ENCODE measurements at regions of chr5 and their contacts with region 1.

Region 1: GRCh38 chr5:115246361-115246991 is 16.2 kb downstream of the PGGT1B start:
- DNase-seq: no peak
- ATAC-seq: peak; percentile 34

Region 2: GRCh38 chr5:115098041-115098702 is 148.3 kb before region 1 on chr5:
- intact Hi-C with region 1: loop called (anchors 2 kb)
- DNase-seq: no peak
- ATAC-seq: peak; percentile 29

Region 3: GRCh38 chr5:115992848-115993350 is 746.4 kb after region 1 on chr5:
- intact Hi-C with region 1: no loop called
- DNase-seq: no peak
- ATAC-seq: no peak

Measured in left ventricle myocardium superior (tissue), 1 donor.